ENCODE measurements at regions of chr15 and their contacts with region 1.

Region 1: DNA sequence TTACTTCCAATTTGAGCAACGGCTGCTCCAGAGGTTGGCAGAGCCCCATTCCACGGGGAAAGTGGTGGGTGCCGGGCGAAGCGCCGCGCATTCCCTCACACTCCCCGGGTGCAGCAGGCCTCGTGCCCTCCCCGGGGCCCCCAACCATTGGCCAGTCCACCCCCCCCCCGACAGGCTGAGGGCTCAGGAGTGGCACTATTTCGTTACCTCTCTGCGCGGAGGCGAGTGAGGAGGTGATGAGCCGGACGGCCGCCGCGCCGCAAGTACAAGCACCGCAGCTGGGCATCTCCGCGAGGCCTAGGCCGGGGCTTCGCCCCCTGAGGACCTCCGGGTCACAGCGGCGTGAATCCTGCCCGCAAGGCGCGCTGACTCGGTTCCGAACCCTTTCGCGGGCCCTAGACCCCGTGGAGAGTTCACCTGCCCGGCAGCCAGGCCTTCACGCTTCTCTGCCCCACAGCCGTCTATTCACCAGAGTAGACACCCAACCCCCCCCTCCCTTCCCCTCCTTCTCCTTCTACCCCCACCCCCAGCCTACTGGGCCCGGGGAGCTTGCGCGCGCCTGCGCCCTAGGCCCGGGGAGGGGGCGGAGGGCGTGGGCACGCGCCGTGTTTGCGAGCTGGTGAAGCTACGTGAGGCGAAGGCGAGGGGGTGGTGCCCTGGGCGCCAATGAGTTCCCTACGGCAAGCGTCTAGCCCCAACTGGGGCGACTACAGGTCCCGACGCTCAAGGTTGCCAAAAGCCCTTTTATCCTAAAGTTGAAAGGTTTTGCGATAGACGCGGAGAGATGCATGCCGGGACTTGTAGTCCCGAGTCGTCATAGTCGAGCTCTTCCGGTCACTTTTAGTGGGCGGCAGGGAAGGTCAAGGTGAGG is at the start of gene CLPX:
- DNase-seq: peak; percentile 90 to 92
- H3K4me3 ChIP-seq: peak within 1 kb of the TSS; percentile 94
- H3K4me3 Mint-ChIP-seq: peak within 1 kb of the TSS; percentile 88
- H3K27ac Mint-ChIP-seq: peak within 1 kb of the TSS; percentile 86
- H3K4me1 ChIP-seq: no peaks in the 10 kb centered on the region
- H3K4me1 Mint-ChIP-seq: no peaks in the 10 kb centered on the region
- H3K27me3 ChIP-seq: no peaks in the 10 kb centered on the region
- H3K27me3 Mint-ChIP-seq: no peaks in the 10 kb centered on the region
- CTCF ChIP-seq: no peak
- total RNA-seq, gene CLPX: 51.4 and 59.4 TPM in 2 replicates

Region 2: GRCh38 chr15:64731012-64731806 is 453.9 kb before region 1 on chr15:
- CTCF ChIA-PET with region 1: no interaction called
- POLR2A ChIA-PET with region 1: interaction called, 22 read pairs
- intact Hi-C with region 1: no loop called
- DNase-seq: peak; percentile 84 to 89
- H3K4me3 ChIP-seq: no peak overlapping the region
- H3K4me3 Mint-ChIP-seq: no peak overlapping the region
- H3K27ac Mint-ChIP-seq: no peak overlapping the region
- H3K4me1 ChIP-seq: no peaks in the 10 kb centered on the region
- H3K4me1 Mint-ChIP-seq: no peaks in the 10 kb centered on the region
- H3K27me3 ChIP-seq: no peaks in the 10 kb centered on the region
- H3K27me3 Mint-ChIP-seq: no peaks in the 10 kb centered on the region
- CTCF ChIP-seq: peak; percentile 89

Region 3: DNA sequence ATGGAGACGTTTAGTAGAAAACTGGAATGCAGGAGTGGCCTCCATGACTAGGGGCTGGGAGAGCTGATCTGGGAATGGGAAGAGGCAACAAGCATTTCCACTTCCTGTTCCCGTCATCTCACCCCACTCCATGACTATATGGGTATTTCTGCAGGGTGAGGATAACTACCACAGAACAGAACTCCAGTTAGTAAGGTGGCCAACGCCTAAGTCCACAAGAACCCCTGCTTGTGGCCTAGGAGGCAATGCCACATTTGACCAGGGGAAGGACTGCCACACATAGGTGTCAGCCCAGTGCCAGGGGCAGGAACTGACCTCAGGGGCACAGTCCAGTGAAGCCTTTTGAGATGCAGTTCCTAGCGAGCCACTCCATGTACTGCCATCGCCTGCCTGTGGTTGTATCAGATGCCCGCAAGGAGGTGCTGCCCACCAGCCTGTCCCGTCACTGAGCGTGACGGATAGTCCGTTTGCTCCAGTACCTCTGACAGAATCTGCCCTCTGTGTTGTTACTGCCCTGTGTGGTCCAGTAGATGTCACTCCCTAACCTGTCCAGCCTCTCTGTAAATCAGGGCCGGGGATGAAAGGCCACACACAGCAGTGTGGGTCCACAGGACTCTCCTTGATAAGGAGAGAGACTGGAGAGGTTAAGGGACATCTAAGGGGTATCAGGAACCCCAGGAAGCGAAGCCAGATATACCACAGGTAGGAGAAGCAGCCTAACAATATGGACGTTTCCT is 152.1 kb before region 1 on chr15:
- CTCF ChIA-PET with region 1: interaction called, 4 read pairs
- POLR2A ChIA-PET with region 1: no interaction called
- intact Hi-C with region 1: loop called (anchors 1 kb)
- DNase-seq: peak; percentile 88 to 92
- H3K4me3 ChIP-seq: no peak overlapping the region
- H3K4me3 Mint-ChIP-seq: peak overlapping the region; percentile 7
- H3K27ac Mint-ChIP-seq: peak overlapping the region; percentile 22
- H3K4me1 ChIP-seq: peaks cover 30% of the 10 kb centered on the region
- H3K4me1 Mint-ChIP-seq: peaks cover 7% of the 10 kb centered on the region
- H3K27me3 ChIP-seq: no peaks in the 10 kb centered on the region
- H3K27me3 Mint-ChIP-seq: no peaks in the 10 kb centered on the region
- CTCF ChIP-seq: peak; percentile 85 to 91

Region 4: GRCh38 chr15:65133548-65134200 is 51.4 kb before region 1 on chr15 and contains the start of gene PDCD7:
- CTCF ChIA-PET with region 1: no interaction called
- POLR2A ChIA-PET with region 1: interaction called, 4 read pairs
- intact Hi-C with region 1: loop called (anchors 5 kb)
- DNase-seq: peak; percentile 83 to 85
- H3K4me3 ChIP-seq: peak within 1 kb of the TSS; percentile 74
- H3K4me3 Mint-ChIP-seq: peak within 1 kb of the TSS; percentile 85
- H3K27ac Mint-ChIP-seq: peak within 1 kb of the TSS; percentile 86
- H3K4me1 ChIP-seq: 0 out of 2 replicates have a peak, but pooled peaks cover 3% of the 10 kb centered on the region
- H3K4me1 Mint-ChIP-seq: no peaks in the 10 kb centered on the region
- H3K27me3 ChIP-seq: no peaks in the 10 kb centered on the region
- H3K27me3 Mint-ChIP-seq: no peaks in the 10 kb centered on the region
- CTCF ChIP-seq: no peak
- total RNA-seq, gene PDCD7: 26.2 and 32.6 TPM in 2 replicates

Region 5: DNA sequence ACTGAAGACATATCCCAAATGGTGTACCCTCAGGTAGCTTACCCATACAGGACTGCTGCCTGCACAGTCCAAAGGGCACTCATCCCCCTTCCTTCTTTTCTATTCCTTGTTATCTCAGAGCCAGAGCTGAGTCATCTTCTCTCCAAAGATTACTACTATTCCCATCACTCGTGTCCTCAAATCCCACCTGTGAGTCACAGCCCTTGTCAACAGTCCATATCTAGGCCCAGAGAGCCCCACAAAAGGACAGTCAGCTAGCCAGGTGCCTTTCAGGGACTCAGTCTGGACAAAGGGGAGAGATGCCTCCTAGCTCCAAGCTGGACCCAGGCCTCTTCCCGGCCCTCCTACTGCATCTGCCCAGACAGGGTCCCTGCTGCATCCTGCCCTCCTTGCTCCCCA is 90.6 kb after region 1 on chr15:
- CTCF ChIA-PET with region 1: interaction called, 16 read pairs
- POLR2A ChIA-PET with region 1: interaction called, 6 read pairs
- intact Hi-C with region 1: loop called (anchors 1 kb)
- DNase-seq: peak; percentile 65 to 80
- H3K4me3 ChIP-seq: no peak overlapping the region
- H3K4me3 Mint-ChIP-seq: peak overlapping the region; percentile 3
- H3K27ac Mint-ChIP-seq: peak overlapping the region; percentile 88
- H3K4me1 ChIP-seq: peaks cover 48% of the 10 kb centered on the region
- H3K4me1 Mint-ChIP-seq: peaks cover 42% of the 10 kb centered on the region
- H3K27me3 ChIP-seq: no peaks in the 10 kb centered on the region
- H3K27me3 Mint-ChIP-seq: no peaks in the 10 kb centered on the region
- CTCF ChIP-seq: no peak

Region 6: DNA sequence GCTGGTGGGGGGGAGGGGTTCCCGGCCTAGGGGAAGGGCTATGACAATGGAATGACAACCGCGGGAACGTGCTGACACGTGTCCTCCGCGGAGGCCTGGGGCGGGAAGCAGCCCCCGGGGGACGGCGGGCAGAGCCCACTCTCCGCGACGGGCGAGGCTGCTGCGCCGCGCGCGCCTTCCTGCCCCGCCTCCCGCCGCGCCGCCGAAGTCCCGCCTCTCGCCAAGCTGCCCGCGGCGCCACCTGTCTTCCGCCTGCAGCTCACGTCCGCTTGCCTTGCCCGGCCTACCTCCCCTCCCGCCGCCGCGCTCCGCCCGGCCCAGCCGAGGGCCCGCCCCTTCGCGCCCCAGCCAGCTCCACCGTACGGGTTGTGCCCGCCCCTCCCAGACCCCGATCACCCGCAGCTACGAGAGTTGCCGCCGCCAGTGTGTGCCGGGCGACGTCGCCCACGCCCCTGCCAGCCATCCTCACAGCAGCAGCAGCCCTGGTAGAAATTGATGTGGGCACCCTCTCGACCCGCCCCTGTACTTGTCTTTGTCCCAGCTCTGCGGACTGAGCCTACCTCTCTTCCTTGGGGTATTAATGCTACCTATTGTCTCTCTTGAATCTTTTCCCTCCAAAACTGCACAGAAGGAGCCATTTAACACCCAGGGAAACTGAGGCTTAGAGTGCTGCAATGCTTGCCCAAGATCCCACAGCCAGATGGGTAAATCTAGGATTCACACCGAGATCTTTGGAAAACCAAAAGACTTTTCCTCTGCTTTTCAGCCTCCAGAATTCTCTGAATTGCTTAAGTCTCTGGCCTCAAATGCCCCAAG is 101.8 kb after region 1 on chr15 and contains the start of gene PARP16:
- CTCF ChIA-PET with region 1: interaction called, 4 read pairs
- POLR2A ChIA-PET with region 1: interaction called, 10 read pairs
- intact Hi-C with region 1: no loop called
- DNase-seq: peak; percentile 92 to 93
- H3K4me3 ChIP-seq: peak within 1 kb of the TSS; percentile 61
- H3K4me3 Mint-ChIP-seq: peak within 1 kb of the TSS; percentile 86
- H3K27ac Mint-ChIP-seq: peak within 1 kb of the TSS; percentile 70
- H3K4me1 ChIP-seq: peaks cover 32% of the 10 kb centered on the region
- H3K4me1 Mint-ChIP-seq: peaks cover 31% of the 10 kb centered on the region
- H3K27me3 ChIP-seq: no peaks in the 10 kb centered on the region
- H3K27me3 Mint-ChIP-seq: no peaks in the 10 kb centered on the region
- CTCF ChIP-seq: peak in 1 of 2 experiments; percentile 31
- total RNA-seq, gene PARP16: 6.9 and 9.5 TPM in 2 replicates

Region 7: GRCh38 chr15:65304389-65305144 is 119.5 kb after region 1 on chr15 and contains the start of gene RNU5B-1:
- CTCF ChIA-PET with region 1: interaction called, 4 read pairs
- POLR2A ChIA-PET with region 1: interaction called, 37 read pairs
- intact Hi-C with region 1: no loop called
- DNase-seq: peak; percentile 86 to 89
- H3K4me3 ChIP-seq: peak within 1 kb of the TSS; percentile 41
- H3K4me3 Mint-ChIP-seq: peak within 1 kb of the TSS; percentile 90
- H3K27ac Mint-ChIP-seq: peak within 1 kb of the TSS; percentile 95
- H3K4me1 ChIP-seq: peaks cover 6% of the 10 kb centered on the region; the same call in 1 of the 2 replicates
- H3K4me1 Mint-ChIP-seq: no peaks in the 10 kb centered on the region
- H3K27me3 ChIP-seq: no peaks in the 10 kb centered on the region
- H3K27me3 Mint-ChIP-seq: no peaks in the 10 kb centered on the region
- CTCF ChIP-seq: peak in 1 of 2 experiments; percentile 77
- total RNA-seq, gene RNU5B-1: not detected in 2 replicates